B cell (primary cell): ENCODE measurements at regions of chr18 and their contacts with region 1.

Region 1: DNA sequence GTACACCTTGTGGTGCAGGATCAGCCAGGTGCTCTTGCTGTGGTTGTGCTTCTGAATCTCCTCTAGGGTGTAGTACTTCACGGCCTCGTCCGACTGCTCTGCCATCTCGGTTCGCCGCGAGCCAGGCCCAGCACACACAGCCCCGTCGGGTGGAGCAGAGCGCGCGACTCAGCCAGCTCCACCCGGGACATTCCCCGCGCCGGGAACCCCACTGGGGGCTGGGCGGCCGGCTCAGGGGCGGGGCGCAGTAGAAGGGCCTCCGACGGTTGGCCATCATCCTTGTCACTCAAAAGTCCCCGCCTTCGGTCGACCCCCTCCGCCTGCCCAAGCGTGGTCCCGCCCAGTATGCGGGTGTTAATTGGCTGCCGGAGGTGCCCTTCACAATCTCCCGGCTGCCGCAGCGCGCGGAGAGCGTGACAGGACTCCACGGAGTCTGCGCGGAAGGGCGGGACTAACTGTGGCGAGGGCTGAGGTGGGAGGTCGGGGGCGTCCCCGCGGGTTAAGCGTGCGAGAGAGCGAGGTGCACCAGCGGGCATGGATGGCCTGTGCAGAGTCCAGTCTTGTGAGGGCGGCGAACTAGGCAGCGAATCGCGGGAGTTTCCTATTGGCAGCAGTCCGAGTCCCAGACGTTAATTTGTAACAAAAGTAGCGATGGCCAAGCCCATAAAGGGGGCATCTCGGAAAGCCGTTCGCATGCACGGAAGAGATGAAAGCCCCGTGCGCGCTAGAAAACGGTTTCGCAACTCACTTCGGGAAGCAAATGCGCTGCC is at the start of gene CYB5A:
- DNase-seq: peak; percentile 99
- ATAC-seq: peak; percentile 96
- H3K4me3 ChIP-seq: peak within 1 kb of the TSS; percentile 66 to 97 (median 85)
- H3K4me3 Mint-ChIP-seq: no peak within 1 kb of the TSS
- H3K27ac ChIP-seq: peak within 1 kb of the TSS; percentile 56 to 66
- H3K27ac Mint-ChIP-seq: peak within 1 kb of the TSS; percentile 89
- H3K4me1 ChIP-seq: peaks cover 15 to 26% of the 10 kb centered on the region in 2 donors
- H3K4me1 Mint-ChIP-seq: peaks cover 41% of the 10 kb centered on the region
- H3K27me3 ChIP-seq: no peaks in the 10 kb centered on the region
- H3K27me3 Mint-ChIP-seq: no peaks in the 10 kb centered on the region
- CTCF ChIP-seq: peak; percentile 3
- total RNA-seq, gene CYB5A: 46.4 and 46.9 TPM in 2 replicates

Region 2: DNA sequence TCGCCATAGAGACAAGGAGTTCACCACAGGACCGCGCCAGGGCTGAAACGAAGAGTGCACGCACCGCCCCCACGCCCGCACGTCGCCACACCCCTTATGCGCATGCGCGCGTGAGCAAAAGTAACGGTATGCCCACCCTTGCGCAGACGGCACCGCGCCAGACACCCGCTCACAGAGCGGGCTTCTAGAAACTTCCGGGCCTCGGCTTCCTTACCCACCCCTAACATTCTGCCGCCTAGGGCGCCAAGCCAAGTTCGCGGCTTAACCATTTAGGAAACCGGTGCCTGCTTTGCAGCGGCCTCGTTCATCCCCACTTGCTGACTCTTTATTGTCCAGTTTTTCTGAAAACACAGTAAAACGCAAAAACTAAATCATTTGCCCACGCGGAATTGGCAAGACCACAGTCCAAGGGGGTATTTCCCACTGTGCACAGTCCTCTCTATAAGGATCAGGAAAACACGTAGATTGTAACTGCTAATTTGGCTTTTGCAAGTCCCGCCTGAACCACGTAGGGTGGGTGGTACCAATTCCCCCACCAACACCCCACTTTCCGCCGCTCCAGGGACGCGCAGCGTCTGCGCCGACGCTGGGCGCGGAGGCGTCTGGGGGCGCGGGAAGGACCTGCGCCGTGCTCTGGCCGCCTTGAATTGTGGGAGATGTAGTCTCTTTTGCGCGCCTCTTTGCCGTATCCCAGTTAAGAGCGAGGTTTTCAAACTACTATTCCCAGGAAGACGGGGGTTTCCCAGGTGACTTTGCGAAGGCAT is 144.0 kb before region 1 on chr18 and contains the starts of genes FBXO15 and TIMM21:
- CTCF ChIA-PET with region 1: no interaction called
- POLR2A ChIA-PET with region 1: no interaction called
- intact Hi-C with region 1: loop called (anchors 1 kb)
- DNase-seq: peak; percentile 98
- ATAC-seq: peak; percentile 84
- H3K4me3 ChIP-seq: peak within 1 kb of the TSS; percentile 75 to 99 (median 89)
- H3K4me3 Mint-ChIP-seq: peak within 1 kb of the TSS; percentile 94
- H3K27ac ChIP-seq: peak within 1 kb of the TSS; percentile 95 to 99
- H3K27ac Mint-ChIP-seq: peak within 1 kb of the TSS; percentile 100
- H3K4me1 ChIP-seq: peaks cover 15 to 21% of the 10 kb centered on the region in 2 donors
- H3K4me1 Mint-ChIP-seq: peaks cover 36% of the 10 kb centered on the region
- H3K27me3 ChIP-seq: no peaks in the 10 kb centered on the region
- H3K27me3 Mint-ChIP-seq: peaks cover 7% of the 10 kb centered on the region
- CTCF ChIP-seq: peak; percentile 1
- total RNA-seq, gene FBXO15: 3.7 and 4.1 TPM in 2 replicates
- total RNA-seq, gene TIMM21: 24.3 and 25.0 TPM in 2 replicates

Region 3: GRCh38 chr18:74249181-74249968 is 42.6 kb before region 1 on chr18:
- CTCF ChIA-PET with region 1: no interaction called
- POLR2A ChIA-PET with region 1: no interaction called
- intact Hi-C with region 1: loop called (anchors 5 kb)
- DNase-seq: no peak
- ATAC-seq: no peak
- H3K4me3 ChIP-seq: peak overlapping the region in 1 of 5 experiments; percentile 8
- H3K4me3 Mint-ChIP-seq: peak overlapping the region; percentile 27
- H3K27ac ChIP-seq: peak overlapping the region; percentile 53 to 80
- H3K27ac Mint-ChIP-seq: peak overlapping the region; percentile 80
- H3K4me1 ChIP-seq: peaks cover 0 to 36% of the 10 kb centered on the region in 2 donors
- H3K4me1 Mint-ChIP-seq: peaks cover 38% of the 10 kb centered on the region
- H3K27me3 ChIP-seq: no peaks in the 10 kb centered on the region
- H3K27me3 Mint-ChIP-seq: no peaks in the 10 kb centered on the region
- CTCF ChIP-seq: no peak

Region 4: DNA sequence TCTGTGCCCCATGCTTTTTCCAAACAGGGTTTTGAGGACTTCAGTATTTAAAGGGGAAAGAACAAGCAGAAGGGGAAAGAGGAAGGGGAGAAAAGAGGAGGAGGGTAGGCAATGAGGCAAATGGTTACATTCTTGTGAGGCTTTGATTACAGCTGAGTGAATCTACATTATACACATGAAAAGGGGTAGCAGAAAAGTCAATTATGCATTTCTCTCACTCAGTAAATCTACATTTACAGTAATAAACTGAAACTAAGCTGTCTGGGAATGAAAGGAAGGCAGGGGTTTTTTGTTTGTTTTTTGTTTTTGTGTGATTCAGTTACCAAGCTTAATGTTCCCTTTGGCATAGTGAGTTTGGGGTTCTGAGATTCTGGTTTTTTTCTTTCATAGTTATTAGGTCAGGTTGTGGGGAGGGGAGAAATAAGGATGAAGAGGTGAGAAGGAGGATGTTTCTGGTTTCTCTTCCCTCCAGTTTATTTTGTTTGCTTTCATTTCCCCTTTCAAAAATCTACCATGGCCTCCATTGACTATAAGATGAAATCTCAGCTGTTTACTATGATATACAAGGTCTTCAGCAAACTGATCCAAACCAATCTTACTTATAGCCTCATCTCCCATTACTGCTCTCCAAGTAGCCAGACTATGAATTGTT is 42.4 kb after region 1 on chr18:
- CTCF ChIA-PET with region 1: no interaction called
- POLR2A ChIA-PET with region 1: no interaction called
- intact Hi-C with region 1: loop called (anchors 2 kb)
- DNase-seq: peak; percentile 72
- ATAC-seq: peak; percentile 88
- H3K4me3 ChIP-seq: no peak overlapping the region
- H3K4me3 Mint-ChIP-seq: peak overlapping the region; percentile 61
- H3K27ac ChIP-seq: peak overlapping the region; percentile 51 to 78
- H3K27ac Mint-ChIP-seq: peak overlapping the region; percentile 92
- H3K4me1 ChIP-seq: peaks cover 22 to 24% of the 10 kb centered on the region in 2 donors
- H3K4me1 Mint-ChIP-seq: peaks cover 45% of the 10 kb centered on the region
- H3K27me3 ChIP-seq: no peaks in the 10 kb centered on the region
- H3K27me3 Mint-ChIP-seq: no peaks in the 10 kb centered on the region
- CTCF ChIP-seq: no peak

Region 5: DNA sequence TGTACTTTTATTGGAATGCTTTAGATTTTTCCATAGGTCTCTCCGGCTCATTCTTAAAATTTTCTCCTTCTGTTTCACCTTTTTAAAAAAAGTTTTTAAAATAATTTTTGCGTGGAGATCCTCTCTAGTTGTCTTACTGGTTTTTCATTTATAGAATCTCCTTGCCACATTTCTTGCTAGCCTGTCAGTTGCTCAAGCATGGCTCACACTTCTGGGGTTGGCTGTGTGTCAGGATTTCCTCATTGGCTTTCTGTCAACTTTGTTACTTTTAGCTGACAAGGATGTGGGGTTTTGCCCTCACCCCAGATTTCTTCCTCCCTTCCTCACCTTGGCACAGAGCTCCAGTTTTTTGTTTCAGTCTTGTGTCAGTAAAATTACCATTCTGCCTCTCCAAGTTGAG is 430.3 kb after region 1 on chr18:
- CTCF ChIA-PET with region 1: no interaction called
- POLR2A ChIA-PET with region 1: no interaction called
- intact Hi-C with region 1: no loop called
- DNase-seq: no peak
- ATAC-seq: no peak
- H3K4me3 ChIP-seq: no peak overlapping the region
- H3K4me3 Mint-ChIP-seq: peak overlapping the region; percentile 10
- H3K27ac ChIP-seq: no peak overlapping the region
- H3K27ac Mint-ChIP-seq: no peak overlapping the region
- H3K4me1 ChIP-seq: peaks cover 0 to 15% of the 10 kb centered on the region in 2 donors
- H3K4me1 Mint-ChIP-seq: peaks cover 30% of the 10 kb centered on the region
- H3K27me3 ChIP-seq: no peaks in the 10 kb centered on the region
- H3K27me3 Mint-ChIP-seq: no peaks in the 10 kb centered on the region
- CTCF ChIP-seq: no peak